GM10248 (cell line): ENCODE measurements at regions of chr11 and their contacts with region 1.

Region 1: DNA sequence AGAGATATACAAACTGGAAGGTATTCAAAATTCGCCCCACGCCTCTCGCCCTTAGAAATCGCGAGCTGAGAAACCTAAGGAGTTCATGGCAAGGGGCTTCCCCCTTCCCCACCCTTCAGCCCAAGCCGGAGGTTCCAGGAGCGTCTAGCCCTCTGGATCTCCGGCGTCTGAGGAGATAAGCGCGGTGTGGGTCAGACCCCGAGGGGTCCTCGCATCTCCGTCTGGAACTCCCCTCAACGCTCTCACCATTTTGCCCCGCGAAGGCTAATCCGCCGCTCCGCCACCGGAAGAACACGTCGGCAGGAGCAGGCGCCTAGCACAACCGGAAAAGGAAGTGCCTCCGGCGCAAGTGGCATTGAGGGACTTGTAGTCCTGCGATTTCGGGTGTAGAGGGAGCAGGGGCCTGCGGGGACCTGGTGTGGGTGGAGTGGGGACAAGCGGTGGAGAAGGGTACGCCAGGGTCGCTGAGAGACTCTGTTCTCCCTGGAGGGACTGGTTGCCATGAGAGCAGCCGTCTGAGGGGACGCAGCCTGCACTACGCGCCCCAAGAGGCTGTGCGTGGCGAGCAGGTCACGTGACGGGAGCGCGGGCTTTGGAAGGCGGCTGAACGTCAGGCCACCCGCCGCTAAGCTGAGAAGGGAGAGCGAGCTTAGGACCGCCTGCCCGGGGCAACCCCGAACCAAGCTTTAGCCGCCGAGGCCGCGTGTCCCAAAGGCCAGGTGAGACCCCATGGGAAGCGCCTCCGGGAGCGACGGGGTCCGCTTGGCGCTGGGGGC is at the starts of genes FEN1 and TMEM258:
- DNase-seq: peak; percentile 93
- CTCF ChIP-seq: no peak

Region 2: GRCh38 chr11:61645179-61645868 is 147.2 kb before region 1 on chr11:
- CTCF ChIA-PET with region 1: no interaction called
- POLR2A ChIA-PET with region 1: no interaction called
- DNase-seq: no peak
- CTCF ChIP-seq: no peak

Region 3: DNA sequence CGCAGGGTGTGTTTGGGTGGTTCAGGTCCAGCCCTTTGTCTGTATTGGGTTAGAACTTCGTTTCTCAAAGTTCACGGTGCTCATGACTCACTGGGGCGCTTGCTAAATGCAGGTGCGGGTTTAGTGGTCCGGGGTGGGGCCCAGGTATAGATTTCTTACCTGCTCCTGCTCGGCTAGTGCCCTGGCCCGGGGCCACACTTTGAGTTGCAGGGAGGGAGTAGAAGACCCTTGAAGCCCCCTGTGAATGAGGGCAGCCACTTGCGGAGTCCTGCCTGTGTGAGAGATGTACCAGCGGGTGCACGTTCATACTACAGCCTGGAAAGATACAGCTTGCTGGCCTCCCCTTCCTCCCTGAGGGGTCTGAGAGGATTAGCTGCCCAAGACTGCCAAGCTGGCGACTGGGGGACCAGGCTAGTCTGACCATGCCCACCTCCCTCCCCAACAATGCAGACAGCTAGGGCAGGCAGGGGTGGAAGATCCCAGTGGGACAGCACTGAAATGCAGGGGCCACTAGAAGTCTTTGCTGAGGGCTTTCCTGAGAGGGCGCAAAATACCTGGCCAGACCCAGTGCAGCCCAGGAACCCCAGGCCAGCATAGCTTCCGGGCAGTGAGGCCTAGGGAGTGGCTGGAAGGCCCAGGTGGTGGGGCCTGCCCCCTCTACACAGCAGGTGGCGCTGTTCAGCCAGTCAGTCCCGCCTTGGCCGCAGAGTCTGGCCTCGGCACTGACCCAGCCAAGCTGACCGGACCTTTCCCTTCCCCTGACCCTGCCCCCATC is 45.1 kb before region 1 on chr11:
- CTCF ChIA-PET with region 1: interaction called, 91 read pairs
- POLR2A ChIA-PET with region 1: no interaction called
- DNase-seq: peak; percentile 89
- CTCF ChIP-seq: peak; percentile 94

Region 4: DNA sequence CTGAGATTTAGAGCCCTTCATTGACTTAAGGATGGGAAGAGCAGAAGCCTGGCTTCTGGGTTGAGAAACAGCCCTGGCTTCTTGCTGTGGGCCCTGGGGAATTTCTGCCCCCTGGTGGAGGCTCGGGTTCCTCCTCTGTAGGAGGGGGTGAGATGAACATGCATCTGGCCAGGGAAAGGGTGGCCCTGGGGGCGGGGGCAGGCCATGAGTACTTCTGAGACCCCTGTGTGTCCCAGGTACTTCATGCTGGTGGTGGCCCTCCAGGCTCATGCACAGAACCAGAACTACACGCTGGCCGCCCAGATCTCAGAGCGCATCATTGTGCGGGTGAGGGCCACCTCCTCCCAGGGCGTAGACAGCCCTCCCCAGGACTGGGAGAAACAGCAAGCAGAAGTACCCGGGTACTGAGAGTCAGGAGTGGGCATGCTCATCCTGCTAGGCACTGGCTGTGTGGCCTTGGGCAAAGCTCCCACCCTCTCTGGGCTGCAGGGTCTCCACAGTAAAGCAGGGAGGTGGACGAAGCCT is 15.9 kb before region 1 on chr11:
- CTCF ChIA-PET with region 1: interaction called, 31 read pairs
- POLR2A ChIA-PET with region 1: interaction called, 5 read pairs
- DNase-seq: peak; percentile 90
- CTCF ChIP-seq: peak; percentile 68

Region 5: DNA sequence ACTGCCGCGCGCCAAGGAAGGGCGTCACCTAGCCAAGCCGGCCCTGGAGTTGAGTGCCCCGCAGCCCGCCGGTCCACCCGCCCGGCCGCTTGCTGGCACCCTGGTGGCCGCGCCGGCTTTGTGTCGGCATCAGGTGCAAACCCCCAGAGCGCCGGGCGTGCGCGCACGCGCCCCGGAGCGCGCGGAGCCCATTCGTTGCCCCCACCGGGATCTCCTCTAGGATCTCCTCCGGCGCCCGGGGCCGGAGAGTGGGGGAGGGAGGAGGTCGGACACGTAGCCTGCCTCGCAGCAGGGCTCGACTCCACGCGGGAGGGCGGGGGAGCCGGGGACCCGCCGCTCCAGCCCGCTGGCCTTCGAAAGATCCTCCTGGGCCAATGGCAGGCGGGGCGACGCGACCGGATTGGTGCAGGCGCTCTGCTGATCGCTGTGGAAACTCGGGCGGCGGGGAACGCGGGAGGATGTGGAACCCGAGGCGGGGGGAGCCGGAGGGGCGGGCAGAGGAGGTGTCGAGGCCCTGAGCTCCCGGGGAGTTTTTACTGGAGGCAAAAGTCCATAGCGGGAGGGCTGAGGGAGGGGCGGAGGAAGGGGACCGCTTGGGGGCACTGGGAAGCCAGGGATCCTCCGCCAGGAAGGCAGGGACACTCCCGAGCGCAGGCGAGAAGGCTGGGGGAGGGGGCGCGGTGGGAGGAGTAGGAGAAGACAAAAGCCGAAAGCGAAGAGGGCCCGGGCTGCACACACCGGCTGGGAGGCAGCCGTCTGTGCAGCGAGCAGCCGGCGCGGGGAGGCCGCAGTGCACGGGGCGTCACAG is 35.3 kb after region 1 on chr11 and contains the start of gene FADS2:
- CTCF ChIA-PET with region 1: interaction called, 29 read pairs
- POLR2A ChIA-PET with region 1: no interaction called
- DNase-seq: peak; percentile 93
- CTCF ChIP-seq: no peak

Region 6: DNA sequence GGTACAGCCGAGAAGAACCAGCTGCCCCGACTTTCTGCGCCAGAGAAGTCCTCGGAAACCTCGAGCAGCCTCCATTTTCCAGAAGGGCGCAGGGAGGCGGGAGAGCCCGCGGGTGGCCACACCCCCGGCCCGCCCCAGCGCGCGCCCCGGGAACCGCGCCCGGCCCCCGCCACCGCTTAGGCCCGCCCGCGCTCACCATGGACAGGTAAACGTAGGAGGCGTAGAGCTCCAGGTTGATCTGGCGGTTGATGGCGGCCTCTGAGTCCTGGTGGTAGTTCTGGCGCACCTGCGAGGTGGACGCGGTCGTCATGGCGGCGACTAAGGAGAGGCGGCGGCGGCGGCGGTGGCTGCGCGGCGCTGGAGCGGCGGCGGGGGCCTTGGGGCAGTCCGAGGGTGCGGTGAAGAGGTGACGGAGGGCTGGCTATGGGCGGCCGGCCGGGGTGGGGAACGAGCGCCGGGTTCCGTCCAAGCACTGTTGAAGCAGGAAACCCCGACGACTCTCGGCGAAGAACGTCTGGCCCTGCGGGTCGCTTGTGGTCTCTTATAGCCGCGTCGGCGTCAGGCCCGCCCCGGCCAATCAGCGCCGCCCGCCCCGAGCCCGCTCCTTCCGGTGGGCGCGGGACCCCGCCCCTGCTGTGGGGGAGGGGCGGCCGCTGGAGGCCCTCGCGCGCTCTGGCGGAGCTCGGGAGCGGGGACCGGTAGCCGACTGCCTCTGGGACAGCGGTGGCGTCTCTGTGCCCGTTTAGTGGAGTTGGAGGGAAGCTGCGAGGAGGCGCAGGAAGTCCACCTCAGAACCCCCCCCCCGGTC is 174.8 kb after region 1 on chr11 and contains the start of gene FTH1:
- CTCF ChIA-PET with region 1: interaction called, 11 read pairs
- POLR2A ChIA-PET with region 1: interaction called, 5 read pairs
- DNase-seq: peak; percentile 94
- CTCF ChIP-seq: no peak